ENCODE measurements at regions of chr1 and their contacts with region 1.

Region 1: DNA sequence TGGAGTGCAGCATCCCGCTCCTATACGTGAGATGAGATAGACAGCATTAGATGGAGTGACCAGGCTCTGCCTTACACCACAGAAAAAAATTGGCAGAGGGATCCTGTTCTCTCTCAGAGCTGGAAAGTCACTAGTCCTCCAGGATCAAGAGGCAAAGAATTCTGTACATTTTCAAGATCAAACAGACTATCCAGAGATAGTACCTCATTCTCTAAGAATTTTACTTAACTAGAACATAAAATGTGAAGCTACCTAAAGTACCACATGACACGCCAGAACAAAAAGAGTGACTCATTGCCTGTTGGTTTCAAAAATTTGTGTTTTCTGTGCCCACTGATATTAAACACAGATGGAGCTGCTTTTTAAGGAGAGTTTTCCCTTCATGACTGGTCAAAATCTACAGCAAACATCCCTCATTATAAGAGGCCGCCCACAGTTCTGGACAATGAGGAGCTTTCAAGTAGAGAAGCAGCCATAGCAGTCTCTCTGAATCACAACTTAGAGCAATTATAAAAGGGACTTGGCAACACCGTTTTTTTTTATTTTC is 32.3 kb downstream of the CD160 start:
- DNase-seq: no peak
- H3K4me3 Mint-ChIP-seq: no peak overlapping the region
- H3K27ac Mint-ChIP-seq: no peak overlapping the region
- H3K4me1 Mint-ChIP-seq: peaks cover 7% of the 10 kb centered on the region
- H3K27me3 Mint-ChIP-seq: no peaks in the 10 kb centered on the region

Region 2: DNA sequence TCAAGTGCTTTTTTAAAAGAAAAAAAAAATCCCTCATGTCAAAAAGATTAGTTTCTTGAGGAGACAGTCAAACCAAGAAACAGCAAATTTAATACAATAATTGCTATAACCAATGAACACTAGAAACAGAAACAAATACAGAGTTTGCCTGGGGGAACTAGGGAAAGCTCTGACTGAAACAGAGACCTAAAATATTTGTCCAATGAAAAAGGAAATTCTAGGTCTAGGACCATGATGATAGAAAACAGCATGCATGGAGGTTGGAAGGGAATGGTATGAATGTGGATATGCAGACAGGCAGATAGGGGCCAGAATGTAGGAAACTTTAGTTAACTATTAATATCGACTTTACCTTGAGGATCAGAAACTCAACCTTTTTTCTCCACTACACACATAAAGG is 40.9 kb after region 1 on chr1:
- intact Hi-C with region 1: loop called (anchors 5 kb)
- DNase-seq: no peak
- H3K4me3 Mint-ChIP-seq: no peak overlapping the region
- H3K27ac Mint-ChIP-seq: no peak overlapping the region
- H3K4me1 Mint-ChIP-seq: peaks cover 23% of the 10 kb centered on the region
- H3K27me3 Mint-ChIP-seq: no peaks in the 10 kb centered on the region

Measured in activated T-helper 1 cell treated with anti-CD3 and anti-CD28 coated beads, Interleukin-12 subunit alpha, Interleukin-12 subunit beta, Interleukin-2, Interleukin-4 antibody, amounts not matched to agents 30 ng/mL and 10 ng/mL and 1 ng/mL, durations not matched to agents 14 hours and 24 hours and 36 hours (primary cell).